AG04449 (cell line): ENCODE measurements at regions of chr9 and their contacts with region 1.

Region 1: GRCh38 chr9:6055213-6055612 is 39.8 kb upstream of the RANBP6 start:
- DNase-seq: peak; percentile 61
- H3K4me3 ChIP-seq: no peak overlapping the region
- CTCF ChIP-seq: peak; percentile 24

Region 2: GRCh38 chr9:5879419-5880181 is 175.6 kb before region 1 on chr9:
- CTCF ChIA-PET with region 1: interaction called, 118 read pairs
- POLR2A ChIA-PET with region 1: no interaction called
- DNase-seq: peak; percentile 40
- H3K4me3 ChIP-seq: no peak overlapping the region
- CTCF ChIP-seq: no peak

Region 3: GRCh38 chr9:6024020-6024554 is 31.1 kb before region 1 on chr9:
- CTCF ChIA-PET with region 1: interaction called, 10 read pairs
- POLR2A ChIA-PET with region 1: no interaction called
- DNase-seq: no peak
- H3K4me3 ChIP-seq: no peak overlapping the region
- CTCF ChIP-seq: no peak

Region 4: DNA sequence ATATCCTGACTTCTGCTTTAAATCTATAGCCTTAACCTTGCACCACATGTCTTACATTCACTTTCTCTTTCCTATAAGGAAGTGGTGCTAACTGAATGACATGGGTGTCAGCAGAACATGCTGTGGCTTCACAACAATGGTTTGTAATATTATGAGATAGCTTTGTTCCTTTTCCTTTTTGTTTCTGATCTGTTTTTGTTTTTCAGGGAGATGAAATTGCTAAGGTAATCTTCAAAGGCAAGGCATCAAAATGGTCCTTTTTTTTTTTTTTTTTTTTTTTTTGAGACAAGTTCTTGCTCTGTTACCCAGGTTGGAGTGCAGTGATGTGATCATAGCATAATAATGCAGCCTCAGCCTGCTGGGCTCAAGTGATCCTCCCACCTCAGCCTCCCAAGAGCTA is 13.8 kb after region 1 on chr9:
- CTCF ChIA-PET with region 1: interaction called, 25 read pairs
- POLR2A ChIA-PET with region 1: no interaction called
- DNase-seq: no peak
- H3K4me3 ChIP-seq: no peak overlapping the region
- CTCF ChIP-seq: no peak